CD14-positive monocyte (primary cell): ENCODE measurements at regions of chr22 and their contacts with region 1.

Region 1: GRCh38 chr22:37561212-37562048 is 1.1 kb downstream of the CDC42EP1 start:
- DNase-seq: peak; percentile 67 to 81 (median 80)
- H3K4me3 ChIP-seq: peak overlapping the region; percentile 45 to 76 (median 47)
- H3K4me3 Mint-ChIP-seq: peak overlapping the region; percentile 83 to 84
- H3K27ac ChIP-seq: peak overlapping the region in 1 of 2 donors; percentile 59
- H3K27ac Mint-ChIP-seq: peak overlapping the region in 5 of 7 donors; percentile 15 to 86 (median 76)
- H3K4me1 ChIP-seq: peaks cover 47 to 73% of the 10 kb centered on the region in 2 donors
- H3K4me1 Mint-ChIP-seq: peaks cover 53% of the 10 kb centered on the region
- H3K27me3 ChIP-seq: peaks cover 2 to 47% of the 10 kb centered on the region in 2 donors
- H3K27me3 Mint-ChIP-seq: peaks cover 56 to 75% (median 73%) of the 10 kb centered on the region in 3 donors
- CTCF ChIP-seq: peak; percentile 92

Region 2: GRCh38 chr22:37599153-37599552 is 37.7 kb after region 1 on chr22:
- intact Hi-C with region 1: loop called in 1 of 2 experiments (anchors 5 kb)
- DNase-seq: no peak
- H3K4me3 ChIP-seq: no peak overlapping the region
- H3K4me3 Mint-ChIP-seq: no peak overlapping the region
- H3K27ac ChIP-seq: no peak overlapping the region
- H3K27ac Mint-ChIP-seq: no peak overlapping the region
- H3K4me1 ChIP-seq: peaks cover 4% of the 10 kb centered on the region in 2 donors
- H3K4me1 Mint-ChIP-seq: peaks cover 15% of the 10 kb centered on the region
- H3K27me3 ChIP-seq: no peaks in the 10 kb centered on the region
- H3K27me3 Mint-ChIP-seq: peaks cover 3 to 9% (median 8%) of the 10 kb centered on the region in 3 donors
- CTCF ChIP-seq: no peak

Region 3: DNA sequence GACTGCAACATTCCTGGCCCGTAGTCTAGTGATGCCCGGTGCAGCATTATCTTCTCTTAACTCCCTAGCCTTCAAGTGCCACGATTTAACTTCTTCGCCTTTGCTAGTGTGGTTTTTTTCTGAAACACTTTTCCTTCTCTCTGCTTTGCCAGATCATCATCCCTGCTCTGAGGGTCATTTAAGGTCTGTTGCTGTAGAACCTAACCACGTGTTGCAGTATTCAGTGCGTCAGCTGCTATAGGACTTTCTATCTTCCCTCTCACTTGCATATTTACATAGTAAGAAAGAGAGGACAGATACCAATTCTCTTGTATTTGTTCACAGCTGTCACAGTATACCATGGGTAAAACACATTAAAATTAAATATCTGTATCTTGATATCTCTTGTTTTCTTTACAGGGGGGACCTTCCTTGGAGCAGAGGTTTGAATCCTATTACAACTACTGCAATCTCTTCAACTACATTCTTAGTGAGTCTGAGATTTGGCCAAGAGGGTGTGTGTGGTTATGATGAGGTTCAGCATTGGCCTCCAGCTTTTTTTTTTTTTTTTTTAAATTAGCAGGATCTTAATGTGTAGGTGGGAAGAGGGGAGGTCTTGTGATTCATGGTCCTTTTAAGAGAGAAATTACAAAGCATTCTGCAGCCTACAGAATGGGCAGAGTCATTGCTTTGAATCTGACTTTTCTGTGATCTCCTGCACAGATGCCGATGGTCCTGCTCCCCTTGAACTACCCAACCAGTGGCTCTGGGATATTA is 301.3 kb after region 1 on chr22:
- intact Hi-C with region 1: no loop called
- DNase-seq: no peak
- H3K4me3 ChIP-seq: no peak overlapping the region
- H3K4me3 Mint-ChIP-seq: no peak overlapping the region
- H3K27ac ChIP-seq: no peak overlapping the region
- H3K27ac Mint-ChIP-seq: no peak overlapping the region
- H3K4me1 ChIP-seq: no peaks in the 10 kb centered on the region
- H3K4me1 Mint-ChIP-seq: no peaks in the 10 kb centered on the region
- H3K27me3 ChIP-seq: no peaks in the 10 kb centered on the region
- H3K27me3 Mint-ChIP-seq: no peaks in the 10 kb centered on the region
- CTCF ChIP-seq: no peak